ENCODE measurements at regions of chr22 and their contacts with region 1.

Region 1: GRCh38 chr22:30754971-30755756 is 60.5 kb downstream of the OSBP2 start:
- DNase-seq: peak; percentile 73
- H3K4me3 Mint-ChIP-seq: no peak overlapping the region
- H3K27ac Mint-ChIP-seq: no peak overlapping the region
- H3K4me1 Mint-ChIP-seq: no peaks in the 10 kb centered on the region
- H3K27me3 Mint-ChIP-seq: no peaks in the 10 kb centered on the region

Region 2: GRCh38 chr22:30628491-30628890 is 126.7 kb before region 1 on chr22:
- CTCF ChIA-PET with region 1: interaction called, 190 read pairs
- DNase-seq: no peak
- H3K4me3 Mint-ChIP-seq: no peak overlapping the region
- H3K27ac Mint-ChIP-seq: no peak overlapping the region
- H3K4me1 Mint-ChIP-seq: no peaks in the 10 kb centered on the region
- H3K27me3 Mint-ChIP-seq: no peaks in the 10 kb centered on the region

Region 3: GRCh38 chr22:30649430-30650007 is 105.6 kb before region 1 on chr22:
- CTCF ChIA-PET with region 1: interaction called, 12 read pairs
- DNase-seq: peak; percentile 77
- H3K4me3 Mint-ChIP-seq: no peak overlapping the region
- H3K27ac Mint-ChIP-seq: peak overlapping the region; percentile 75
- H3K4me1 Mint-ChIP-seq: peaks cover 31% of the 10 kb centered on the region
- H3K27me3 Mint-ChIP-seq: no peaks in the 10 kb centered on the region

Region 4: GRCh38 chr22:30694171-30694639 is 61.0 kb before region 1 on chr22:
- CTCF ChIA-PET with region 1: interaction called, 19 read pairs
- DNase-seq: peak; percentile 75
- H3K4me3 Mint-ChIP-seq: peak overlapping the region; percentile 89
- H3K27ac Mint-ChIP-seq: no peak overlapping the region
- H3K4me1 Mint-ChIP-seq: peaks cover 15% of the 10 kb centered on the region
- H3K27me3 Mint-ChIP-seq: peaks cover 46% of the 10 kb centered on the region

Region 5: GRCh38 chr22:30742291-30743256 is 12.6 kb before region 1 on chr22:
- CTCF ChIA-PET with region 1: interaction called, 48 read pairs
- DNase-seq: no peak
- H3K4me3 Mint-ChIP-seq: no peak overlapping the region
- H3K27ac Mint-ChIP-seq: peak overlapping the region; percentile 61
- H3K4me1 Mint-ChIP-seq: peaks cover 63% of the 10 kb centered on the region
- H3K27me3 Mint-ChIP-seq: no peaks in the 10 kb centered on the region

Region 6: GRCh38 chr22:30777587-30777986 is 22.4 kb after region 1 on chr22:
- CTCF ChIA-PET with region 1: no interaction called
- DNase-seq: no peak
- H3K4me3 Mint-ChIP-seq: no peak overlapping the region
- H3K27ac Mint-ChIP-seq: no peak overlapping the region
- H3K4me1 Mint-ChIP-seq: peaks cover 6% of the 10 kb centered on the region
- H3K27me3 Mint-ChIP-seq: no peaks in the 10 kb centered on the region

Region 7: DNA sequence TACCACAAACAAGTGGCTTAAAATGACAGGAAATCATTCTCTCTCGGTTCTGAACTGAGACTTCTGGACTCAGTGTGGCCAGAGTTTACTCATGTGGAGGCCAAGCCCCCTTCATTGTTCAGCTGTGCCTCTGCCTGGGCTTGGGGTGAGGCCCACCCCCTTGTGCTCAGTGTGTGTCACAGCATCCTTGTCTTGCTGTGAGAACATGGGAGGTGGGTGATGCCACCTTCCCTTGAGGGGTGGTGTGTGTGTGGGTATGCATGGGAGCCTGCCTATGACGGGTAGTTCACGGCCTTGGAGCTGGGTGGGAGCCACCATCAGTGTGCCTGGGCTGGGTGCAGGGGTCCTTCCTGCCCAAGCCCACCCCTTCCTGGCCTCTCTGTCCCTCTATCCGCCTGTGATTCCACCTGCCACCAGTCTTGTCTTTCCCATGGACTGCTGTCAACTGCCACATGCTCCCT is 111.7 kb after region 1 on chr22:
- CTCF ChIA-PET with region 1: no interaction called
- DNase-seq: no peak
- H3K4me3 Mint-ChIP-seq: no peak overlapping the region
- H3K27ac Mint-ChIP-seq: no peak overlapping the region
- H3K4me1 Mint-ChIP-seq: no peaks in the 10 kb centered on the region
- H3K27me3 Mint-ChIP-seq: no peaks in the 10 kb centered on the region